ENCODE measurements at regions of chr17 and their contacts with region 1.

Region 1: GRCh38 chr17:79393358-79394202 is 217.3 kb downstream of the RBFOX3 start:
- DNase-seq: peak; percentile 93
- ATAC-seq: peak; percentile 70
- H3K4me3 Mint-ChIP-seq: no peak overlapping the region
- H3K27ac Mint-ChIP-seq: no peak overlapping the region
- H3K4me1 Mint-ChIP-seq: peaks cover 3% of the 10 kb centered on the region; the same call in 1 of the 2 replicates
- H3K27me3 Mint-ChIP-seq: peaks cover 21% of the 10 kb centered on the region
- CTCF ChIP-seq: peak; percentile 97

Region 2: GRCh38 chr17:79082311-79083190 is 311.0 kb before region 1 on chr17:
- CTCF ChIA-PET with region 1: interaction called, 162 read pairs
- POLR2A ChIA-PET with region 1: interaction called, 3 read pairs
- DNase-seq: peak; percentile 86
- ATAC-seq: peak; percentile 82
- H3K4me3 Mint-ChIP-seq: no peak overlapping the region
- H3K27ac Mint-ChIP-seq: no peak overlapping the region
- H3K4me1 Mint-ChIP-seq: no peaks in the 10 kb centered on the region
- H3K27me3 Mint-ChIP-seq: no peaks in the 10 kb centered on the region
- CTCF ChIP-seq: peak; percentile 77

Region 3: DNA sequence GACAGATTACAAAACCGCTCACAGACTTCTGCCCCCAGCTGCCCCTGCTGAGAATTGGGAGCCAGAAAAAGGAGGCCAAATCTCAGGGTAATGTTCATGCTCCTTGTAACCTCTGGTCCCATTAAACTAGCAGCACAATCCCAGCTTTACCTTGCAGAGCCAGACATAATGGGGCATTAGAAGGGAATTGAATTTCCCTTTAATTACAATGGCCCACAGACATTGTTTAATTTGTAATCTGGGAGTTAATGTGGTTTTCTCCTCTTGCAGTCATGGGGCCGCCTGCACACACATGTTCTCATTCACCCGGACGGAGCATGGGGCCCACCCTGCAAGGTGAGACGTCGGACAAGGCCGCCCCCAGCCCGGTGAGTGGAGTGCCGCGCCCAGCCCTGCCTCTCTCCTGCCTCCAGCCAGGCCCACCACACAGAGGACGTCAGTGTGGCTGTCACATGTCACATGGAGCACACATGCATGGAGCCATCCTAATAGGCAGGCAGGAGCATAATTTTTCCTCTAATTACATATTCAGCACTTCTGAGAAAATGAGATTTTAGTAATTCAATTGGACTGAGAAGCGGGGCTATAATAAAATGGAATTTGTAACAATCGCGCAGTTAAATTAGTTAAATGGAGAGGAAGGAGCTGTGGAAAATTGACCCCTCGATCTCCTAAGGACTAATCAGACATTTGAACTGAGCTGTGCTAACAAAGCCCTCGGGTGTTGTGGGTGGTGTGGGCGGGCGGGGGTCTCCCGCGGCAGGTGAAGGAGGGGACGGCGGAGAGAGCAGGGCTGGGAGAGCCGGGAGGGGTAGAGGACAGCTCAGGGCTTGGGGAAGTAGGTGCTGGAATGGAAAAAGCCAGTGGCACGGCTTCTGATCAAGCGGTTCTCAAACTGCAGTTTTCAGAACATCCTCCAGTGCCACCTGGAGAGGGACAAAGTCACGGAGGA is 231.3 kb before region 1 on chr17:
- CTCF ChIA-PET with region 1: interaction called, 12 read pairs
- POLR2A ChIA-PET with region 1: no interaction called
- DNase-seq: no peak
- ATAC-seq: no peak
- H3K4me3 Mint-ChIP-seq: no peak overlapping the region
- H3K27ac Mint-ChIP-seq: no peak overlapping the region
- H3K4me1 Mint-ChIP-seq: peaks cover 3% of the 10 kb centered on the region; the same call in 1 of the 2 replicates
- H3K27me3 Mint-ChIP-seq: no peaks in the 10 kb centered on the region
- CTCF ChIP-seq: no peak

Region 4: GRCh38 chr17:79201536-79202227 is 191.9 kb before region 1 on chr17:
- CTCF ChIA-PET with region 1: interaction called, 21 read pairs
- POLR2A ChIA-PET with region 1: no interaction called
- DNase-seq: no peak
- ATAC-seq: no peak
- H3K4me3 Mint-ChIP-seq: no peak overlapping the region
- H3K27ac Mint-ChIP-seq: 0 out of 2 replicates have a peak overlapping the region, but pooled peaks have one; percentile 24
- H3K4me1 Mint-ChIP-seq: peaks cover 32% of the 10 kb centered on the region
- H3K27me3 Mint-ChIP-seq: no peaks in the 10 kb centered on the region
- CTCF ChIP-seq: no peak

Region 5: GRCh38 chr17:79248843-79249493 is 144.6 kb before region 1 on chr17:
- CTCF ChIA-PET with region 1: interaction called, 11 read pairs
- POLR2A ChIA-PET with region 1: no interaction called
- DNase-seq: no peak
- ATAC-seq: peak; percentile 38
- H3K4me3 Mint-ChIP-seq: no peak overlapping the region
- H3K27ac Mint-ChIP-seq: no peak overlapping the region
- H3K4me1 Mint-ChIP-seq: peaks cover 8% of the 10 kb centered on the region
- H3K27me3 Mint-ChIP-seq: no peaks in the 10 kb centered on the region; the same call in 1 of the 2 replicates
- CTCF ChIP-seq: no peak

Region 6: GRCh38 chr17:79355165-79355564 is 38.4 kb before region 1 on chr17:
- CTCF ChIA-PET with region 1: interaction called, 14 read pairs
- POLR2A ChIA-PET with region 1: no interaction called
- DNase-seq: no peak
- ATAC-seq: no peak
- H3K4me3 Mint-ChIP-seq: no peak overlapping the region
- H3K27ac Mint-ChIP-seq: no peak overlapping the region
- H3K4me1 Mint-ChIP-seq: peaks cover 3% of the 10 kb centered on the region; the same call in 1 of the 2 replicates
- H3K27me3 Mint-ChIP-seq: no peaks in the 10 kb centered on the region; the same call in 1 of the 2 replicates
- CTCF ChIP-seq: no peak

Region 7: GRCh38 chr17:79473111-79473875 is 79.7 kb after region 1 on chr17:
- CTCF ChIA-PET with region 1: no interaction called
- POLR2A ChIA-PET with region 1: no interaction called
- DNase-seq: no peak
- ATAC-seq: no peak
- H3K4me3 Mint-ChIP-seq: no peak overlapping the region
- H3K27ac Mint-ChIP-seq: no peak overlapping the region; the same call in 1 of the 2 replicates
- H3K4me1 Mint-ChIP-seq: peaks cover 6% of the 10 kb centered on the region
- H3K27me3 Mint-ChIP-seq: peaks cover 2% of the 10 kb centered on the region; the same call in 1 of the 2 replicates
- CTCF ChIP-seq: no peak